SK-N-SH (cell line): ENCODE measurements at regions of chr1 and their contacts with region 1.

Region 1: GRCh38 chr1:222455188-222455879 is 92.6 kb downstream of the HHIPL2 start:
- DNase-seq: peak; percentile 68
- H3K4me3 ChIP-seq: peak overlapping the region; percentile 3 to 5; a peak in 3 of 4 replicates
- H3K27ac ChIP-seq: peak overlapping the region in 1 of 2 experiments; percentile 67; a peak in 2 of 4 replicates
- H3K4me1 ChIP-seq: peaks cover 0 to 16% of the 10 kb centered on the region in 2 experiments; a peak in 2 of 4 replicates
- H3K27me3 ChIP-seq: no peaks in the 10 kb centered on the region
- CTCF ChIP-seq: peak; percentile 98
- EP300 ChIP-seq: no peak
- RAD21 ChIP-seq: peak; percentile 92

Region 2: DNA sequence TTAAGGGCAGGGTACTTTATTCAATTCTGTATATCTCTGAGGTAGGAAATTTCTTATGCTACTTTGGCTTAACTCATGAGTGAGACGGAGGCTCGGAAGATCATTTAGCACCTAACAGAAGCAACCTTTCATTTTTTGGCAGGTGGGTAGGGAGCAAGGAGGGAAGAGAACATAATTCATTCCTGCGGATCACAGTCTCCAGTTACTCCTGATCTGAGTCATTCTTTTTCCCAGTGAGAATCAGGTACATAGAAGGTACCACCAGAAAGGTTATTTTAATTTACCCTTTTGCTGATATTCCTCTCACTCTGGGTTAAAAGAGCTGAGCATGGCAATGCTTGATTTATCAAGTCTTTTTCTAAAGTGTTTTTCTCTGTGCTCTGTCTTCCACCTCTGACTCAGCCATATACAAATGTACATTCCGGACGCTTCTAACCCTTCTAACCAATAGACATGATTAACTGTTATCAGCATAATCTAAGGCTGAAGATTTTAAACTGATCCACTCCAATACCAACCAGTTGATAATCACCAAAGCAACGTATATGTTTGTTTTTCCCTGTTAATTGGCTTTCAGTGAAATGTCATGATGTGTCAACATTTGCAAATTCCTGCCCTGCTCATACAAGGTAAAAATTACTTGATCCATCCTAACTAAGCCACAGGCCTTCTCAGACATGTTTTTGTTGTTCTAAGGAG is 985.2 kb before region 1 on chr1:
- CTCF ChIA-PET with region 1: interaction called, 15 read pairs
- POLR2A ChIA-PET with region 1: no interaction called
- DNase-seq: no peak
- H3K4me3 ChIP-seq: no peak overlapping the region
- H3K27ac ChIP-seq: no peak overlapping the region
- H3K4me1 ChIP-seq: no peaks in the 10 kb centered on the region
- H3K27me3 ChIP-seq: no peaks in the 10 kb centered on the region
- CTCF ChIP-seq: no peak
- EP300 ChIP-seq: no peak
- RAD21 ChIP-seq: no peak

Region 3: DNA sequence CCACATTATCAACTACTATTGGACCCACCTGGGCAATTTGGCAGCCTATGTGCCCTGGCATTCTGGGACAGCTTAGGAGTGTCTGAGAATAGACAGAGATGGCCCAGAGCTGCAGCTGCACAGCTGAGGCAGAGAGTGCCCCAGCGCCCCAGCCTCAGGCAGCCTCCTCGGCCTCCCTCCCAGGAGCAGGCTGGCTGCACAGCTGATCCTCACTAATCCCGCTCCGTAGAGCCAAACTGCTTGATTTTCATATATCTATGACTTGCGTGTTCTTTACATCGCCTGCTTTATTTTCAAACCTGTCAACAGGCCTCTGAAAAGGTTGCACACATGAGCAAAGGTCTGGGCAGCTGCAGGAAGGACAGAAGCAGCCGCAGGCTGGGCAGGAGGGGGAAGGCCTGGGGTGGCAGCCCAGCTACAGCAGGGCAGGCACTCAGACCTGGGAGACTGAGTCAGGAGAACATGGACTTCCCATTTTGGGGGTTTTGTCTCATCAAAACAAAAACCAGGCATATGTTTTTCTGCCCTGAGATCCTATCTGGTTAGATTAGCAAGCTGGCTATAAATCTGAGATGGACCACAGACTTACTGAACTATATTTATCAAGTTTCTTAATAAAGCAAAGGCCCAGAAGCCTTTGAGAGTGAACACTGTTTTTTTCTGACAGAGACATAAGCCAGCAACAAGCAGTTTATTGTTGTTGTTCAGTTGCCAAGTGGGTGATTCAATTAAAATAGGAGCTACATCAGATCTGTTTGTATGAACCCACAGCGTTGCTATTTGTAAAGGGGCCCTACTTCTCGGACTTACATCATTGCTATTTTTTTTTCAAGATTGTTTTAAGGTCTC is 411.7 kb before region 1 on chr1:
- CTCF ChIA-PET with region 1: interaction called, 12 read pairs
- POLR2A ChIA-PET with region 1: no interaction called
- DNase-seq: peak; percentile 76
- H3K4me3 ChIP-seq: no peak overlapping the region
- H3K27ac ChIP-seq: peak overlapping the region; percentile 92 to 98
- H3K4me1 ChIP-seq: peaks cover 13 to 47% of the 10 kb centered on the region in 2 experiments
- H3K27me3 ChIP-seq: no peaks in the 10 kb centered on the region
- CTCF ChIP-seq: no peak
- EP300 ChIP-seq: peak; percentile 77 to 98; a peak in 3 of 4 replicates
- RAD21 ChIP-seq: no peak; the same call in 1 of the 2 replicates

Region 4: DNA sequence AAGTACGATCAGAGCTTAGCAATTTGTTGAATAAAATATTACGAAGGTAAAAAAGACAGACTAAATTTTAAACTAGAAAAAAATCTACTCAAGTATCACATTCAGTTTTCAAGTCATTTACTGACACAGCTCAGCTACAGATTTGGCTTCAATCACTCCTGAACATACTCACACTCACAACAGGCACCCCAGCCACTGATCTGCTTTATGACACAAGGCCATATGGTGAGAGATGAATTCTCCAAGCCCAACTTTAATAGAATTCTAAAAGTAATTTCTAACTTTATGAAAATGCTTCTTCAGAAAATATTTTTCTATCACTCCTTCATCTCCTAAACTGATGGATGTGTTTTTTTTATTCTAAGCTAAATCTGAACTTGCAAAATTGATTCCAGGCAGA is 244.6 kb before region 1 on chr1:
- CTCF ChIA-PET with region 1: interaction called, 10 read pairs
- POLR2A ChIA-PET with region 1: no interaction called
- DNase-seq: no peak
- H3K4me3 ChIP-seq: no peak overlapping the region
- H3K27ac ChIP-seq: no peak overlapping the region
- H3K4me1 ChIP-seq: no peaks in the 10 kb centered on the region
- H3K27me3 ChIP-seq: no peaks in the 10 kb centered on the region
- CTCF ChIP-seq: no peak
- EP300 ChIP-seq: no peak
- RAD21 ChIP-seq: no peak

Region 5: GRCh38 chr1:222314839-222315238 is 140.5 kb before region 1 on chr1:
- CTCF ChIA-PET with region 1: interaction called, 10 read pairs
- POLR2A ChIA-PET with region 1: no interaction called
- DNase-seq: no peak
- H3K4me3 ChIP-seq: no peak overlapping the region
- H3K27ac ChIP-seq: no peak overlapping the region
- H3K4me1 ChIP-seq: no peaks in the 10 kb centered on the region
- H3K27me3 ChIP-seq: no peaks in the 10 kb centered on the region
- CTCF ChIP-seq: no peak
- EP300 ChIP-seq: no peak
- RAD21 ChIP-seq: no peak

Region 6: GRCh38 chr1:222561656-222562055 is 106.3 kb after region 1 on chr1:
- CTCF ChIA-PET with region 1: no interaction called
- POLR2A ChIA-PET with region 1: no interaction called
- DNase-seq: no peak
- H3K4me3 ChIP-seq: no peak overlapping the region
- H3K27ac ChIP-seq: no peak overlapping the region
- H3K4me1 ChIP-seq: no peaks in the 10 kb centered on the region
- H3K27me3 ChIP-seq: no peaks in the 10 kb centered on the region
- CTCF ChIP-seq: 0 out of 2 replicates have a peak, but pooled peaks have one; percentile 6
- EP300 ChIP-seq: no peak
- RAD21 ChIP-seq: no peak

Region 7: GRCh38 chr1:222634180-222635013 is 179.1 kb after region 1 on chr1:
- CTCF ChIA-PET with region 1: interaction called, 15 read pairs
- POLR2A ChIA-PET with region 1: no interaction called
- DNase-seq: peak; percentile 56
- H3K4me3 ChIP-seq: no peak overlapping the region; a peak in 1 of 4 replicates
- H3K27ac ChIP-seq: no peak overlapping the region
- H3K4me1 ChIP-seq: no peaks in the 10 kb centered on the region
- H3K27me3 ChIP-seq: no peaks in the 10 kb centered on the region
- CTCF ChIP-seq: peak; percentile 93
- EP300 ChIP-seq: no peak
- RAD21 ChIP-seq: peak; percentile 83

Region 8: GRCh38 chr1:222665964-222666363 is 210.6 kb after region 1 on chr1:
- CTCF ChIA-PET with region 1: no interaction called
- POLR2A ChIA-PET with region 1: no interaction called
- DNase-seq: no peak
- H3K4me3 ChIP-seq: no peak overlapping the region
- H3K27ac ChIP-seq: no peak overlapping the region
- H3K4me1 ChIP-seq: peaks cover 0 to 6% of the 10 kb centered on the region in 2 experiments; a peak in 2 of 4 replicates
- H3K27me3 ChIP-seq: no peaks in the 10 kb centered on the region
- CTCF ChIP-seq: no peak
- EP300 ChIP-seq: no peak
- RAD21 ChIP-seq: no peak